ENCODE measurements at regions of chr1 and their contacts with region 1.

Region 1: GRCh38 chr1:179002552-179003345 is 22.9 kb upstream of the FAM20B start:
- DNase-seq: peak; percentile 32 to 70 (median 50)
- ATAC-seq: peak; percentile 82
- H3K4me3 ChIP-seq: no peak overlapping the region
- H3K4me3 Mint-ChIP-seq: peak overlapping the region in 5 of 10 donors; percentile 1 to 59 (median 34)
- H3K27ac ChIP-seq: no peak overlapping the region
- H3K27ac Mint-ChIP-seq: peak overlapping the region in 7 of 9 donors; percentile 1 to 90 (median 49)
- H3K4me1 ChIP-seq: peaks cover 18 to 23% of the 10 kb centered on the region in 2 donors
- H3K4me1 Mint-ChIP-seq: peaks cover 10 to 23% (median 17%) of the 10 kb centered on the region in 7 donors
- H3K27me3 ChIP-seq: no peaks in the 10 kb centered on the region
- H3K27me3 Mint-ChIP-seq: peaks cover 0 to 2% (median 0%) of the 10 kb centered on the region in 5 donors

Region 2: GRCh38 chr1:178310685-178311105 is 692.1 kb before region 1 on chr1:
- CTCF ChIA-PET with region 1: interaction called, 4 read pairs
- POLR2A ChIA-PET with region 1: no interaction called
- intact Hi-C with region 1: loop called in 1 of 2 experiments (anchors 2 kb)
- DNase-seq: peak in 5 of 9 donors; percentile 13 to 42 (median 22)
- ATAC-seq: peak; percentile 69
- H3K4me3 ChIP-seq: no peak overlapping the region
- H3K4me3 Mint-ChIP-seq: no peak overlapping the region
- H3K27ac ChIP-seq: no peak overlapping the region
- H3K27ac Mint-ChIP-seq: no peak overlapping the region
- H3K4me1 ChIP-seq: no peaks in the 10 kb centered on the region
- H3K4me1 Mint-ChIP-seq: no peaks in the 10 kb centered on the region
- H3K27me3 ChIP-seq: no peaks in the 10 kb centered on the region
- H3K27me3 Mint-ChIP-seq: peaks cover 0 to 16% (median 8%) of the 10 kb centered on the region in 5 donors

Region 3: GRCh38 chr1:178532392-178532791 is 470.4 kb before region 1 on chr1:
- CTCF ChIA-PET with region 1: interaction called, 29 read pairs
- POLR2A ChIA-PET with region 1: no interaction called
- intact Hi-C with region 1: loop called (anchors 1 to 2 kb)
- DNase-seq: peak; percentile 42 to 74 (median 63)
- ATAC-seq: peak; percentile 92
- H3K4me3 ChIP-seq: no peak overlapping the region
- H3K4me3 Mint-ChIP-seq: peak overlapping the region in 1 of 10 donors; percentile 27
- H3K27ac ChIP-seq: no peak overlapping the region
- H3K27ac Mint-ChIP-seq: no peak overlapping the region
- H3K4me1 ChIP-seq: peaks cover 0 to 6% of the 10 kb centered on the region in 2 donors
- H3K4me1 Mint-ChIP-seq: peaks cover 0 to 4% (median 4%) of the 10 kb centered on the region in 7 donors
- H3K27me3 ChIP-seq: no peaks in the 10 kb centered on the region
- H3K27me3 Mint-ChIP-seq: peaks cover 0 to 2% (median 0%) of the 10 kb centered on the region in 5 donors

Region 4: GRCh38 chr1:178542560-178543356 is 460.0 kb before region 1 on chr1:
- CTCF ChIA-PET with region 1: interaction called, 11 read pairs
- POLR2A ChIA-PET with region 1: no interaction called
- intact Hi-C with region 1: loop called (anchors 1 to 2 kb)
- DNase-seq: peak; percentile 61 to 98 (median 87)
- ATAC-seq: peak; percentile 96
- H3K4me3 ChIP-seq: peak overlapping the region; percentile 99
- H3K4me3 Mint-ChIP-seq: peak overlapping the region; percentile 89 to 96 (median 92)
- H3K27ac ChIP-seq: peak overlapping the region; percentile 56
- H3K27ac Mint-ChIP-seq: peak overlapping the region; percentile 32 to 88 (median 83)
- H3K4me1 ChIP-seq: peaks cover 0 to 5% of the 10 kb centered on the region in 2 donors
- H3K4me1 Mint-ChIP-seq: peaks cover 0 to 15% (median 10%) of the 10 kb centered on the region in 7 donors
- H3K27me3 ChIP-seq: no peaks in the 10 kb centered on the region
- H3K27me3 Mint-ChIP-seq: no peaks in the 10 kb centered on the region

Region 5: DNA sequence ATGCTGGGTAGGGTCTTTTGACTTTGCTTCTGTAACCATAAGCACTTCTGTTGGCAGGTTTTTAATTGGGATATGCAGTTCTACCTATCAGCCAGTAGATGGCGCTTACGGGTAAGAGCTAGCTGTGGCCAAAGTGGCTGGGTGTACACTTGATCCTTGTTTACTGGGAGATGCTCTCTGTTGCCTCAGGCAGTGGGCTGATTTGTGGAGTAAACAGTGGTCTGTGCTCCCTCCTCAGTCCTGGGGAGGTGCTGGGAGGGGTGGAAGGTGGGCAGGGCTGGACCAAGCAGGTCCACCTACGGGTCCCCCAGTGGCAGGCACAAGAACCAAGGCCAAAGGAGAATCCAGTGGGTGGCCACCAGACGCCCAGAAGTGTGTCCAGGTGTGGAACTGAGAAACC is 234.3 kb before region 1 on chr1:
- CTCF ChIA-PET with region 1: interaction called, 5 read pairs
- POLR2A ChIA-PET with region 1: no interaction called
- intact Hi-C with region 1: loop called in 1 of 2 experiments (anchors 1 kb)
- DNase-seq: peak in 5 of 9 donors; percentile 3 to 26 (median 15)
- ATAC-seq: peak; percentile 61
- H3K4me3 ChIP-seq: no peak overlapping the region
- H3K4me3 Mint-ChIP-seq: no peak overlapping the region
- H3K27ac ChIP-seq: no peak overlapping the region
- H3K27ac Mint-ChIP-seq: peak overlapping the region in 1 of 9 donors; percentile 16
- H3K4me1 ChIP-seq: no peaks in the 10 kb centered on the region
- H3K4me1 Mint-ChIP-seq: peaks cover 0 to 16% (median 8%) of the 10 kb centered on the region in 7 donors
- H3K27me3 ChIP-seq: no peaks in the 10 kb centered on the region
- H3K27me3 Mint-ChIP-seq: no peaks in the 10 kb centered on the region

Region 6: GRCh38 chr1:178774263-178774662 is 228.5 kb before region 1 on chr1:
- CTCF ChIA-PET with region 1: interaction called, 5 read pairs
- POLR2A ChIA-PET with region 1: no interaction called
- intact Hi-C with region 1: loop called (anchors 1 kb)
- DNase-seq: peak in 4 of 9 donors; percentile 11 to 28 (median 20)
- ATAC-seq: no peak
- H3K4me3 ChIP-seq: no peak overlapping the region
- H3K4me3 Mint-ChIP-seq: no peak overlapping the region
- H3K27ac ChIP-seq: no peak overlapping the region
- H3K27ac Mint-ChIP-seq: no peak overlapping the region
- H3K4me1 ChIP-seq: no peaks in the 10 kb centered on the region
- H3K4me1 Mint-ChIP-seq: no peaks in the 10 kb centered on the region
- H3K27me3 ChIP-seq: no peaks in the 10 kb centered on the region
- H3K27me3 Mint-ChIP-seq: no peaks in the 10 kb centered on the region

Region 7: GRCh38 chr1:179058487-179059483 is 56.0 kb after region 1 on chr1:
- CTCF ChIA-PET with region 1: no interaction called
- POLR2A ChIA-PET with region 1: no interaction called
- intact Hi-C with region 1: loop called in 1 of 2 experiments (anchors 10 kb)
- DNase-seq: no peak
- ATAC-seq: no peak
- H3K4me3 ChIP-seq: no peak overlapping the region
- H3K4me3 Mint-ChIP-seq: no peak overlapping the region
- H3K27ac ChIP-seq: no peak overlapping the region
- H3K27ac Mint-ChIP-seq: peak overlapping the region in 5 of 9 donors; percentile 1 to 16 (median 7)
- H3K4me1 ChIP-seq: no peaks in the 10 kb centered on the region
- H3K4me1 Mint-ChIP-seq: peaks cover 0 to 6% (median 0%) of the 10 kb centered on the region in 7 donors
- H3K27me3 ChIP-seq: no peaks in the 10 kb centered on the region
- H3K27me3 Mint-ChIP-seq: no peaks in the 10 kb centered on the region

Measured in naive thymus-derived CD4-positive, alpha-beta T cell (primary cell).